ENCODE measurements at regions of chr17 and their contacts with region 1.

Region 1: GRCh38 chr17:78883164-78884122 is 19.6 kb downstream of the CEP295NL start:
- DNase-seq: peak; percentile 91 to 95
- H3K4me3 ChIP-seq: peak overlapping the region; percentile 13; the same call in 1 of the 2 replicates
- H3K4me3 Mint-ChIP-seq: peak overlapping the region; percentile 68
- H3K27ac Mint-ChIP-seq: peak overlapping the region; percentile 96
- H3K4me1 ChIP-seq: peaks cover 40% of the 10 kb centered on the region
- H3K4me1 Mint-ChIP-seq: peaks cover 19% of the 10 kb centered on the region
- H3K27me3 ChIP-seq: no peaks in the 10 kb centered on the region
- H3K27me3 Mint-ChIP-seq: no peaks in the 10 kb centered on the region
- CTCF ChIP-seq: no peak

Region 2: DNA sequence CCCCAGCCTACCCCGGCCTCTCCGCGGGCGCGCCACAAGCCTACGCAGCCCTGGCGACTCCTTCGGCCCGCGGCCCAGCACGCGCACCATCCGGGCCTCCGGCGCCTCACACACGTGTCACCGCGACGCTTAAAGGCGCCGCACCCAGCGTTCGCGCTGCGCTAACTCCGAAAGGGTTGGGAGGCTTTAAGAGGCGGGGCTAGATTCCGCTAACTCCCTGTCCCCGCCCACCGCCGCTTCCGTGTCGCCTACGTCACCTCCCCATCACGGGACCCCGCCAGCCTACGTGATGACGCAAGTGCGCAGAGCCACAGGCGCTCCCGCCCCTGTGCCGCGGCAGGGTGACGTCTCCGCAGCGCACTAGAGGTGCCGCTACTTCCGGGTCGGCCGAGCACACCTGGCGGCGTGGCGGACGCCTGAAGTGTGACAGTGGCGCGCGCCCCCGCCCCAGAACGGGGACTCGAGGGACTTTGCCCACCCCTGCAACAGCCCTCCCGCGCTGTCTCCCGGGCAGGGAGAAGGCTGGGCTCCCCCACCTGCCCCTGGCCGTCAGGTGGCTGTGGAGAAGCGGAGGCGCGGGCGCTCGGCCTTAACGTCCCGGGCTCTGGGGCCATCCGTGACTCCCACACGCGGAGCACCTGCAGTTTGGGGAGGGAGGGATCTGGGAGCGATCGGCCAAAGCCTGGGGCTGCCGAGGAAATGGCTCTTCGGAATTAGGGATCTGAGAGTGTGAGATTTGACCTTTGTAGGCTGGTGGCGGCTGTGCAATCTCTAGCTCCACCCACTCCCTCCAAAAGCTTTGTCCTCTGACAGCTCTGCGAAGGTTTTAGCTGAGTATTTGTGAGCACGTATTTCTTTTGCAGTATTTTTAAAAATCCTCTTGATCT is 42.5 kb before region 1 on chr17 and contains the start of gene USP36:
- CTCF ChIA-PET with region 1: no interaction called
- POLR2A ChIA-PET with region 1: no interaction called
- intact Hi-C with region 1: loop called (anchors 1 kb)
- DNase-seq: peak; percentile 100
- H3K4me3 ChIP-seq: peak within 1 kb of the TSS; percentile 66
- H3K4me3 Mint-ChIP-seq: peak within 1 kb of the TSS; percentile 87
- H3K27ac Mint-ChIP-seq: peak within 1 kb of the TSS; percentile 83
- H3K4me1 ChIP-seq: peaks cover 28% of the 10 kb centered on the region
- H3K4me1 Mint-ChIP-seq: peaks cover 16% of the 10 kb centered on the region
- H3K27me3 ChIP-seq: no peaks in the 10 kb centered on the region
- H3K27me3 Mint-ChIP-seq: no peaks in the 10 kb centered on the region
- CTCF ChIP-seq: peak in 1 of 2 experiments; percentile 13
- total RNA-seq, gene USP36: 103 and 108 TPM in 2 replicates

Region 3: DNA sequence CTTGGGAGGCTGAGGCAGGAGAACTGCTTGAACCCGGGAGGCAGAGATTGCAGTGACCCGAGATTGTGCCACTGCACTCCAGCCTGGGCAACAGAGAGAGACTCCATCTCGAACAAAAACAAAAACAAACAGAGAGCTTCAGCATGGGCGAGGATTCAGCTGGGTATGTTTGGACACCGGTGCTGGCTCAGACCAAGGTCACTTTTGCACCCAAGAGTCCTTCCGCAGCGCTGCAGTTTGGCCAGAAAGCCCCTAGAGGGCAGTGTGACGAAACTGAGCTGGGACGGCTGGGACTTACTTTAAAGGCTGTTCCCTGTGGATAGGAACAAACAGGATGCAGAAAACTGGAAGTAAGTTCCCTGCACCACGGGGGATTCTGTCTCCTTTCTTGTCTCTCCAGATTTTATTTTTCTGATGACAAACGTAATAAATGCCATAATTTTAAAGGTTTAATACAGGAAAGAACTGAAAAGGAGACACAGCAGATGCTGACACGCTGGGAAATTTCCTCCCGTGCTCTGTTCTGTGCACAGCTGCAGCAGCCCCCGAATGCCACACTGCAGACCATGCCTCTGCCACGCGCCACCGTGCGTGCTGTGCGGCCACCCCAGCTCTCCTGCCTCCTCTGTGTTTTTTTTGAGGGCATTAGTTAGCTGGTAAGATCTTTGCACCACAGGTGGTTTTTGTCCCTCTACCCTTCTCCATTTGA is 17.6 kb before region 1 on chr17:
- CTCF ChIA-PET with region 1: interaction called, 12 read pairs
- POLR2A ChIA-PET with region 1: no interaction called
- intact Hi-C with region 1: no loop called
- DNase-seq: peak; percentile 81 to 87
- H3K4me3 ChIP-seq: no peak overlapping the region
- H3K4me3 Mint-ChIP-seq: no peak overlapping the region
- H3K27ac Mint-ChIP-seq: no peak overlapping the region
- H3K4me1 ChIP-seq: no peaks in the 10 kb centered on the region
- H3K4me1 Mint-ChIP-seq: no peaks in the 10 kb centered on the region
- H3K27me3 ChIP-seq: no peaks in the 10 kb centered on the region
- H3K27me3 Mint-ChIP-seq: no peaks in the 10 kb centered on the region
- CTCF ChIP-seq: peak; percentile 96 to 97

Region 4: DNA sequence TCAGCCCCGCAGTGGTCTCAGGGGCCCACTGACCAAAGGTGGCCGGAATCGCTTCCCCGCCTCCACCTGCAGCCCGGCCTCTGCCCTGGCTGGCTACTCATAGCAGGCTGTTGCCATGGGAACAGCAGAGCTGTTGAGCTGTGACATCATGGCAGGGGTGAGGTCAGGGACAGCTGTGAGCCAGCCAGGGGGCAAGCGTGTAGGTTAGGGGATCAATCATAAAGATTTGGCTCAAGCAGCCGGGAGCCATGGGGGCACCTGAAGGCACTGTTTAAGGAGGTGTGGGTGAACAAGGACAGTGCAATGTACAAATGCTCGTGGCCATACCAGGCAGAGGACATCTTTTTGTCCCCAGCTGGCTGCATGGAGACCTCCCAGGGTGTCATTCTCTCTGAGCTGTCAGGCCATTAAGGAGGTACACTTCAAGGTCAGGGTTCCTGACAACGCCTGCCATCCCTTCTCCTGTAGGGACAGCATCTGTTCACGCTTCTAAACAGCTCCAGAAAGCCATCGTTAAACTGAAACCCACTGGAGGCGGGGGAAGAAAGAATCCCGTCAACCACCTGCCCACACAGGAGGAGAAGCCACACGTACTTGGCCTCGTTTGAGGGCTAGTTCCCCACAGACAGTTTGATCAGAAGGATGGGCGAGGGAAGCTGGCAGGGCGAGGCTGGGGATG is 19.8 kb after region 1 on chr17 and contains the start of gene CEP295NL:
- CTCF ChIA-PET with region 1: interaction called, 5 read pairs
- POLR2A ChIA-PET with region 1: interaction called, 6 read pairs
- intact Hi-C with region 1: loop called (anchors 1 kb)
- DNase-seq: peak in 1 of 2 experiments; percentile 47
- H3K4me3 ChIP-seq: no peak within 1 kb of the TSS
- H3K4me3 Mint-ChIP-seq: no peak within 1 kb of the TSS
- H3K27ac Mint-ChIP-seq: peak within 1 kb of the TSS; percentile 88
- H3K4me1 ChIP-seq: peaks cover 24% of the 10 kb centered on the region
- H3K4me1 Mint-ChIP-seq: peaks cover 45% of the 10 kb centered on the region
- H3K27me3 ChIP-seq: no peaks in the 10 kb centered on the region
- H3K27me3 Mint-ChIP-seq: no peaks in the 10 kb centered on the region
- CTCF ChIP-seq: no peak
- total RNA-seq, gene CEP295NL: 1.7 and 2.0 TPM in 2 replicates

Region 5: DNA sequence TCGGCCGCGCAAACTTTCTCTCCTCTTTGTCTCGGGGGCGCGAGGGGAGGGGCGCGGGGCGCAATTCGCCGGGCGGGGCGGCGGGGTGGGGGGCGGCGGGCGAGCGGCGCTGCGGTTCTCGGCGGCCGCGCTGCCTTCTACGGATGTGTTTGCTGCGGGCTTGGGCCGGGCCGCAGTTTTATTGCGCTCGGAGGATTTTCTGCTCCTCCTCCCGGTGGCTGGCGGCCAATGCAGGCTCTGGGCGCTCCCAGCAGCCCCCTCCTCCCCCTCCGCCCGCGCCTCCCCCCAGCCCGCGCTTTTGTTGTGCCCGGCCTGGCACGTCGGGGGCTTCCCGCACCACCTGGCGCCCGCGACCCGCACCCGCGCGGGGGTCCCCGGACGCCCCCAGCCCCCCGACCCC is 41.8 kb after region 1 on chr17 and contains the start of gene TIMP2:
- CTCF ChIA-PET with region 1: interaction called, 3 read pairs
- POLR2A ChIA-PET with region 1: interaction called, 4 read pairs
- intact Hi-C with region 1: loop called (anchors 2 kb)
- DNase-seq: peak; percentile 88 to 91
- H3K4me3 ChIP-seq: peak within 1 kb of the TSS; percentile 80
- H3K4me3 Mint-ChIP-seq: peak within 1 kb of the TSS; percentile 90
- H3K27ac Mint-ChIP-seq: peak within 1 kb of the TSS; percentile 39
- H3K4me1 ChIP-seq: peaks cover 23% of the 10 kb centered on the region
- H3K4me1 Mint-ChIP-seq: peaks cover 23% of the 10 kb centered on the region
- H3K27me3 ChIP-seq: no peaks in the 10 kb centered on the region
- H3K27me3 Mint-ChIP-seq: peaks cover 3% of the 10 kb centered on the region
- CTCF ChIP-seq: peak; percentile 35 to 62
- total RNA-seq, gene TIMP2: 63.8 and 70.1 TPM in 2 replicates

Region 6: DNA sequence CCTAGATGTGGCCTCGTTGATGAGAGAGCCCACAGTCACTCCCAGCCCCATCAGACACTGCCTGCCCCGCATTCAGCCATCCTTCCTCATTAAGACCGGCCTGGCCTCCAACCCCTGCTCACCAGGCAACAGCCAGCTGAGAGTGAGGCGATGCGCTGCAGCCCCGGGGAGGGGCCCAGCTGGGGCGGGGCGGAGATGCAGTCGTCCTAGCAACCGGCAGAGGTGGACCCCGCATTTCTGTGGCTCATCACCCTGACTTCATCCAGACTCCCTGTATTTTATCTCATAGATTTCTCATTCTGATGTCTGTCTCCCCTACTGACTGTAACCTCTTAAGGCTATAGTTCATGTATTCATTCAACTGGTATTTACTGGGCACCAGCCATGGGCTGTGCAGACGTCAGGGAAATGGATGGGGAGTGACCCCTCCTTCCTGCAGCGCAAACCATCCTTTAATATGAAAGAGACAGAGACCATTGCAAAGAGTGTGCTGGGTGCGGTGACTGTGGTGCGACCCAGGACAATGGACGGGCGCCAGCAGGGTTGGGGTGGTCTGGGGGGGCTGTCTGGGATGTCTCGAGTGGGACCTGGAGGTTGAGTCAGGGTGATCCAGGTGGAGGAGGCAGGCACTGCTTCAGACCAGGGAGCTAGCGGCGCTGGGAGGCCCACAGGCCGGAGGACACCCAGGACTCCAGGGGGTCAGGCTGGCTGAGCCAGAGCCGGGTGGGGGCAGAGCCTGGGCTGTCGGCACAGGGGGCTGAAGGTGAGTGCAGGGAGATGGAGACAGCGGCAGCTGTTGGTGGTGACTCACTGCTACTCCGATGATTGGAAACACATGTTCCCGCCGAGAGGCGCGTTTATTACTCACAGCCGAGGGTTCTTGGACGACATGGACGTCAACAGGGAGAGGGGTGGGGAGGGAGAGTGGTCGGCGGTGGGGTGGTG is 52.2 kb after region 1 on chr17:
- CTCF ChIA-PET with region 1: no interaction called
- POLR2A ChIA-PET with region 1: no interaction called
- intact Hi-C with region 1: no loop called
- DNase-seq: no peak
- H3K4me3 ChIP-seq: no peak overlapping the region
- H3K4me3 Mint-ChIP-seq: no peak overlapping the region
- H3K27ac Mint-ChIP-seq: peak overlapping the region; percentile 27
- H3K4me1 ChIP-seq: peaks cover 19% of the 10 kb centered on the region
- H3K4me1 Mint-ChIP-seq: peaks cover 19% of the 10 kb centered on the region
- H3K27me3 ChIP-seq: no peaks in the 10 kb centered on the region
- H3K27me3 Mint-ChIP-seq: no peaks in the 10 kb centered on the region
- CTCF ChIP-seq: no peak

Region 7: DNA sequence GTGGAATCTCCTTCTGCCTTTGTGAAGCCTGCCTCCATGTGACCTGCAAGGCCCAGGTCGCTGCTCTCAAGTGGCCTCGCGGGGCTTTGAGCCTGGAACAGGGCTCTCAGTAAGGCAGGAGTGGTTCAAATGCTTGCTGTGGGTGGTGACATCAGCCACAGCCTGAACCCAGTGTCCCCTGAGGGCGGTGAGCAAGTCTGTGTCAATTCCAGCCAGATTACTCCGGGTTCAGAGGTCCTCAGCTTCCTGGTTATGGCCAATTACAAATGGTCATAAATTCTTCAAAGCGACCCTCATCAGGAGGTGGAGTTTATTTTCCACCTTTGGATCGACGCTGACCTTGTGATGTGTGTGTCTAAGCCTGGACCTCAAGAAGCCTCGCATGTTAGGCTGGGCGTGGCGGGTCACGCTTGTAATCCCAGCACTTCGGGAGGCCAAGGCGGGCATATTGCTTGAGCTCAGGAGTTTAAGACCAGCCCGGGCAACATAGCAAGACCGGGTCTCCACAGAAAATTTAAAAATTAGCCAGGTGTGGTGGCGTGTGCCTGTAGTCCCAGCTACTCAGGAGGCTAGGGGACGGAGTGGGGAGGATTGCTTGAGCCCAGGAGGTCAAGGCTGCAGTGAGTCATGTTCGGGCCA is 79.0 kb after region 1 on chr17:
- CTCF ChIA-PET with region 1: no interaction called
- POLR2A ChIA-PET with region 1: no interaction called
- intact Hi-C with region 1: loop called (anchors 1 kb)
- DNase-seq: peak; percentile 86 to 94
- H3K4me3 ChIP-seq: no peak overlapping the region
- H3K4me3 Mint-ChIP-seq: no peak overlapping the region
- H3K27ac Mint-ChIP-seq: peak overlapping the region; percentile 86
- H3K4me1 ChIP-seq: peaks cover 35% of the 10 kb centered on the region
- H3K4me1 Mint-ChIP-seq: peaks cover 19% of the 10 kb centered on the region
- H3K27me3 ChIP-seq: no peaks in the 10 kb centered on the region
- H3K27me3 Mint-ChIP-seq: no peaks in the 10 kb centered on the region
- CTCF ChIP-seq: no peak

Region 8: DNA sequence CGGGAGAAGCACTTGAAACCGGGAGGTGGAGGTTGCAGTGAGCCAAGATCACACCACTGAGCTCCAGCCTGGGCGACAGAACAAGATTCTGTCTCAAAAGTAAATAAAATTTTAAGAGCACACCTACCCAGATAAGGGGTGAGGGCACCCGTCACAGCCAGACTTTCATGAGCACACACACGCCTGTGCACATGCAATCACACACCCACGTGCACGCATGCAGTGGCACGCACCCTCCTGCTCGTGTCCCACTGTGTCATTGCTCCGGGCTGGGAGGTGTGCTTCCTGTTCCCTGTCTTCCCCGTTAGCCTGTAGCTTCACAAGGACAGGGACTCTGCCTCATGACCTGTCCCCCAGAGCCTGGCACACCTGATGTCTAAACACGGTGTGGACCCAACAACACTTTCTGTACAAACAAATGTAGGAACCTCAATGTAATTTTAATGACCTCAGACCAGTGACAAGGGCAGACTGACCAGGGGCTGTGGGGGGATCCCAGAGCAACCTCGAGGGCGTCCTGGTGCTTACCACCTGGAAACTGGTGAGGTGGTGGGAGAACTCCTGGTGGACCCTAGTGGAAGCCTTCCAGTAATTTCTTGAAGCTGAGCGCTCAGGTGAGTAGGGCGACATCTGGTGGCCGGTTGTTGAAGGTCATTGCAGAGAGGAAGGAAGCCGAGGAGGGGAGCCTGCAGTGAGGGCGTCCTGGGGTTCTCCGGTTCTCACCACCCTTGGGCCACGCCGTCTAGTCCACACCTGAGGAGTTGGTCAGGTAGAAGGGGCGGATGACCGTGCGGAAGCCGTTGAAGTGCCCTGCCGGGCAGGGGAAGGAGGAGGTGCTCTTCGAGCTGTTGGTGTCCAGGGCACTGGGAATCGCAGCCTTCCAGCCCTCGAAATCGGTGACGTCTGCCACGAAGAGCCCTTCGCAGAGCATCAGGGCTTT is 87.7 kb after region 1 on chr17:
- CTCF ChIA-PET with region 1: interaction called, 13 read pairs
- POLR2A ChIA-PET with region 1: no interaction called
- intact Hi-C with region 1: no loop called
- DNase-seq: peak; percentile 86
- H3K4me3 ChIP-seq: no peak overlapping the region
- H3K4me3 Mint-ChIP-seq: no peak overlapping the region
- H3K27ac Mint-ChIP-seq: peak overlapping the region; percentile 87
- H3K4me1 ChIP-seq: peaks cover 42% of the 10 kb centered on the region
- H3K4me1 Mint-ChIP-seq: peaks cover 24% of the 10 kb centered on the region
- H3K27me3 ChIP-seq: no peaks in the 10 kb centered on the region
- H3K27me3 Mint-ChIP-seq: no peaks in the 10 kb centered on the region
- CTCF ChIP-seq: peak; percentile 87 to 95

Measured in Caco-2 (cell line).